Activated B cell treated with CpG ODN at 0.5 μM for 24 hours (primary cell): ENCODE measurements at regions of chr3 and their contacts with region 1.

Region 1: DNA sequence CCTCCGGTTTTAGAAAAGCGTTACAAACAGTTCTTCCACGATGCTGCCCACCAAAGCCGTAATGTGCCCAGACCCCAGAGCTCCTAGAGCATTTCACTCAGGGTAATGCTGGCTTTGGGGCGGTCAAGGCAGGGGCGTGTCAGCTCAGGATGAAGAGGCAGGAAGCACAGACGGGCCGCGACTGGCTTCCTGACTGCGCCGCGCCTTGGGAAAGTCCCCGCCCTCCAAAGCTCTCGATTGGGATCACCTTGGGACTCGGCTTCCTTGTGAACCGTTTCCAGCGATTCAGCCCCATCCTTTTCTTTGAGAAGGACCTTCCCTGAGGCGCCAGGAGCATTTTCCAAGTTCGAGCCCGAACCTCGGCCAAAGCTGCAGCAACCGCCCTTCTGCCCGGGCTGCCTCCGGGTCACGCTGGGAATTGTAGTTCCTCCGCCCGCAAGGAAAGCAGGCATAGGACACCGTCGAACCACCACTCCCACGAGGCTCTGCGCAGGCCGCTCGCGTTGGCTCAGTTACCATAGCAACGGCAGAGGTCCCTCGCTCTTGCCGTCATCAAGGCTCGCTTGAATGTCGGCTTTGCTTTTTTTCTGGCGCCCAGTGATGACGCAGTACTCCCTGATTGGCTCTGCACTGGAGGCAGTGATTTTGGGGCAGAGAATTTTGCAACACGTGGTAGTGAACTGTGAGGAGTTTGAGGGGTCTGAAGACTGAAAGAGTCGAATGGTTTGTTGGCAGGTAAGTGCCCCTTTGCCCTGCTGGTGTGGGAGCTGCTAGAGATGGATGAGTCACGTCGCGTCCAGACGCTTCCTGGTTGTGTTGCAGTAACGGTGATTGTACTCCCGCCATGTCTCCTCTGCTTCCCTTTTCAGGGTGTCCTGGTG is at the starts of genes CCDC191 and QTRT2:
- DNase-seq: peak; percentile 89
- ATAC-seq: peak; percentile 95
- H3K4me3 Mint-ChIP-seq: peak within 1 kb of the TSS; percentile 99
- H3K27ac Mint-ChIP-seq: peak within 1 kb of the TSS; percentile 99
- H3K4me1 Mint-ChIP-seq: peaks cover 55% of the 10 kb centered on the region
- H3K27me3 Mint-ChIP-seq: peaks cover 3% of the 10 kb centered on the region
- CTCF ChIP-seq: no peak
- total RNA-seq, gene CCDC191: 14.7 and 17.2 TPM in 2 replicates
- total RNA-seq, gene QTRT2: 63.1 and 75.5 TPM in 2 replicates

Region 2: GRCh38 chr3:113696658-113697499 is 359.5 kb before region 1 on chr3:
- CTCF ChIA-PET with region 1: no interaction called
- POLR2A ChIA-PET with region 1: interaction called, 3 read pairs
- intact Hi-C with region 1: loop called (anchors 1 kb)
- DNase-seq: peak; percentile 95
- ATAC-seq: peak; percentile 89
- H3K4me3 Mint-ChIP-seq: no peak overlapping the region
- H3K27ac Mint-ChIP-seq: no peak overlapping the region
- H3K4me1 Mint-ChIP-seq: peaks cover 29% of the 10 kb centered on the region
- H3K27me3 Mint-ChIP-seq: no peaks in the 10 kb centered on the region
- CTCF ChIP-seq: no peak

Region 3: DNA sequence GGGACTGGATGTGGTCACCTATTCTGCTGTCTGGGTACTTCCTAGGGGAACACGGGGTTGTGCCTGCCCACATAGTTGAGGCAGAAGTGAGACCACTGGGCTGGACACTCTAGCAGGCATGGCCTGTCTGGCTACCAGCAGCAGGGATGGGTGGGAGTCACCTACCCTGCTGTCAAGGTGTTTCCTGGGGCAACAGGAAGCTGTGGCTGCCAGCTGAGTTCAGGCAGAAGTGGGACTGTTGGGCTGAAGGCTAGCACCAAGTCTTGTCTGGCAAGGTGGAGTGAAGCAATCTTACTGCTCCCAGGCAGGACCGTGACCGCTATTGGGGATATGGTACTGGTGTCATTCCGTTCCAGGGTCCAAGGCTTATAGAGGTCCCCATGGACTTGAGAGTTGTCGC is 128.8 kb before region 1 on chr3:
- CTCF ChIA-PET with region 1: no interaction called
- POLR2A ChIA-PET with region 1: no interaction called
- intact Hi-C with region 1: no loop called
- DNase-seq: no peak
- ATAC-seq: no peak
- H3K4me3 Mint-ChIP-seq: no peak overlapping the region
- H3K27ac Mint-ChIP-seq: no peak overlapping the region
- H3K4me1 Mint-ChIP-seq: peaks cover 8% of the 10 kb centered on the region
- H3K27me3 Mint-ChIP-seq: no peaks in the 10 kb centered on the region
- CTCF ChIP-seq: no peak

Region 4: GRCh38 chr3:113947372-113948014 is 108.9 kb before region 1 on chr3 and contains the start of gene ZDHHC23:
- CTCF ChIA-PET with region 1: no interaction called
- POLR2A ChIA-PET with region 1: interaction called, 4 read pairs
- intact Hi-C with region 1: loop called (anchors 1 kb)
- DNase-seq: peak; percentile 87
- ATAC-seq: peak; percentile 83
- H3K4me3 Mint-ChIP-seq: peak within 1 kb of the TSS; percentile 86
- H3K27ac Mint-ChIP-seq: peak within 1 kb of the TSS; percentile 84
- H3K4me1 Mint-ChIP-seq: peaks cover 18% of the 10 kb centered on the region
- H3K27me3 Mint-ChIP-seq: no peaks in the 10 kb centered on the region
- CTCF ChIP-seq: no peak
- total RNA-seq, gene ZDHHC23: 22.7 and 27.4 TPM in 2 replicates

Region 5: DNA sequence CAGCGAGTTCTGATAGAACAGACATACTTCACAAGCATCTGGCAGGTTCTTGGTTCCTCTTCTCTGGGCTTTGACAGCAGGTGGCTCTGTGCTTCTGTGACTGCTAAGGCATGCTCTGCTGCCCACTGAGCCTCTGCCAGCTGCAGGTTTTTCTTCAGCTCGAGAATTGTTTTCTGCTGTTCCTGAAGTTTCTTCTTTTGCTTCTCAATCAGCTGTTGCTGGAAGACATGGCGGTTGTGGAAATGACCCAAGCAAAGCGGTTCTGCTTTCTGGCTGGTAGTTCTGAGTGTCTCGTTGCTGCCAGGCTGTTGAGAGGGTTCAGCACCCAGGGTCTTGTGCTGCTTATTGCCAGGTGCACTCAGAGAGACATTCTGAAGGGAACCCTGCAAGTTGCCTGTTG is 50.9 kb before region 1 on chr3:
- CTCF ChIA-PET with region 1: interaction called, 14 read pairs
- POLR2A ChIA-PET with region 1: interaction called, 53 read pairs
- intact Hi-C with region 1: loop called (anchors 1 kb)
- DNase-seq: peak; percentile 52
- ATAC-seq: peak; percentile 95
- H3K4me3 Mint-ChIP-seq: peak overlapping the region; percentile 76
- H3K27ac Mint-ChIP-seq: peak overlapping the region; percentile 97
- H3K4me1 Mint-ChIP-seq: peaks cover 61% of the 10 kb centered on the region
- H3K27me3 Mint-ChIP-seq: no peaks in the 10 kb centered on the region
- CTCF ChIP-seq: no peak

Region 6: GRCh38 chr3:114428043-114428595 is 371.7 kb after region 1 on chr3:
- CTCF ChIA-PET with region 1: no interaction called
- POLR2A ChIA-PET with region 1: no interaction called
- intact Hi-C with region 1: loop called (anchors 2 kb)
- DNase-seq: no peak
- ATAC-seq: peak; percentile 90
- H3K4me3 Mint-ChIP-seq: peak overlapping the region; percentile 55
- H3K27ac Mint-ChIP-seq: peak overlapping the region; percentile 90
- H3K4me1 Mint-ChIP-seq: peaks cover 51% of the 10 kb centered on the region
- H3K27me3 Mint-ChIP-seq: no peaks in the 10 kb centered on the region
- CTCF ChIP-seq: no peak